Left lung (tissue), 14 donors: ENCODE measurements at regions of chr14 and their contacts with region 1.

Region 1: DNA sequence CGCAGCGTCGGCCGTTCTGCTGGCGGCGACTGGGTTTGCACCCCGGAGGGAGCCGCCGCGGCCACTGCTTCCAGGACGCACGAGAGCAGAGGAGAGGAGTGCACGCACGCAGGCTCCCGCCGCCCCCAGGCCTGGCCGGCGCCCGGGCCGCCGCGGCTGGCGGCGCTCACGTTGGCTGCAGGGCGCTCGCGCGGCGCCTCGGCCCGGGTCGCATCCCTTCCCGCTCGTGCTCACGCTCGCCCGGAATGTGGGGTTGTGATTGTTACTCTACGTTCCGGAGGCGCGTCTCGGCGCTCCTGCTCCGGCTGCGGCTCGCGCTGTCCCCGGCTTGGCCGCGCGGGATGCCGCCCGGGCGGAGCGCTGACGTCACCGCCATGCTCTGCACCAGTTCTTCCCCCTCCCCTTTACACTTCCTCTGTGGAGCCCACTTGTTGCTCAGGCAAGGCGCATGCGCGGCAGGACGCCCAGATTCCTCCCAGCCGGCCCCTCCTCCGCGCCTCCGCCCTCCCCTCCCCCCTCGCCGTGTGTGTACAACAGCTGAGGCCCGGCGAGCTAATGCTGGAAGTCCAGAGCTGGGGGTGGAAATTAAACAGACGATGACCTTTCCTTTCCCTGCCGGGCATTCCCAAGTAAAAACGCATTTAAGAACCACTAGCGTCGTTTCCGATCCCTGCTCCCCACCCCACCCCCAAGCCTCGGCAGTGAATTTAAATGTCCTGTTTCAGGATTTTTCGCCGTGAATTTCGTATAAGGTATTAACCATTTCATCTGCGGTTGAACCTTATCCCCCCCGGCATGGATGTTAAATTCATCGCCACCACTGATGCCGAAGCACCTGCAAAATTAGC is at the start of gene IRF2BPL:
- DNase-seq: peak; percentile 97 to 100 (median 99)
- ATAC-seq: peak; percentile 63
- H3K4me3 ChIP-seq: peak within 1 kb of the TSS; percentile 74 to 94
- H3K27ac ChIP-seq: peak within 1 kb of the TSS; percentile 99 to 100
- H3K4me1 ChIP-seq: peaks cover 42 to 81% of the 10 kb centered on the region in 2 donors
- H3K27me3 ChIP-seq: no peaks in the 10 kb centered on the region
- CTCF ChIP-seq: peak in 1 of 2 donors; percentile 8
- polyA plus RNA-seq, gene IRF2BPL: 22.8 to 50.0 (median 41.8) TPM

Region 2: GRCh38 chr14:76968621-76969063 is 60.0 kb before region 1 on chr14:
- intact Hi-C with region 1: loop called in 1 of 2 experiments (anchors 10 kb)
- DNase-seq: no peak
- ATAC-seq: no peak
- H3K4me3 ChIP-seq: no peak overlapping the region
- H3K27ac ChIP-seq: no peak overlapping the region
- H3K4me1 ChIP-seq: no peaks in the 10 kb centered on the region
- H3K27me3 ChIP-seq: no peaks in the 10 kb centered on the region
- CTCF ChIP-seq: no peak

Region 3: GRCh38 chr14:77158175-77158891 is 129.7 kb after region 1 on chr14:
- intact Hi-C with region 1: no loop called
- DNase-seq: no peak
- ATAC-seq: peak; percentile 86
- H3K4me3 ChIP-seq: no peak overlapping the region
- H3K27ac ChIP-seq: no peak overlapping the region
- H3K4me1 ChIP-seq: no peaks in the 10 kb centered on the region
- H3K27me3 ChIP-seq: peaks cover 7 to 74% of the 10 kb centered on the region in 2 donors
- CTCF ChIP-seq: no peak